ENCODE measurements at regions of chr3 and their contacts with region 1.

Region 1: DNA sequence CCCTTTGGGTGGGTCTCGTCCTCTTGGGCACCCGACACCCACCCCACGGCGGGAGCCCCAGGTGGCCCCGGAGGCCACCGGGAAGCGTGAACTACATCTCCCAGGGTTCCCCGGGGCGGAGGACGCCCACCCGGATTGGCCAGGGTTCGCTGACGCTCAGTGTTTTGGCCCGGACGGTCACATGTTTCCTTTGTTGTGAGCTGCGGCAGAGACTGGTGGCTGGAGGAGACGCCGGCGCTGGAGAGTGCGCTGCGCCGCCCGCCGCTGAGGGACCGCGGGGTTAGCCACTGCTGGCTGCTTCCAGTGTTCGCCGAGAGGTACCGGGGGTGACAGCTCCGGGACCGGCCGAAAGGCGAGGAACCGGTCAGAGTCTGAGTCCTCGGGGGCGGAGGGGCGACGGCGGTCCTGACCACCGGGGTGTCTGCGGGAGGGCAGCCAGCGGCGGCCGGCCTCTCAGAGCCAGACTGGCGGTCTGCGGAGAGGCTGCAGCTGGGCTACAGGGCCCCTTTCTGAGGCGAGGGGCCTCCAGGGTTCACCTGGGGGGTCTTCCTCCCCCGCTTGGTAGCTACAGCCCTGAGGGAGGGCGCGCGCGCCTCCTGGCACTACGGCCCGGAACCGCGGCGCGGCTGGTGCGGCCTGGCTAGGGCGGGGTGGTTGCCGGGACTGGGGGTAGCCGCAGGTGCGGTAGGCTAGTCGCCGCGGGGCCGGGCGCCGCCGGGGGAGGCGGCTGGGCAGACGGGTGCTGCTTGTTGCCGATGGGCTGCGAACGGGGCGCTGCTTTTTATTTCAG is at the start of gene KLHL24:
- DNase-seq: peak; percentile 94
- H3K4me3 ChIP-seq: peak within 1 kb of the TSS; percentile 92
- H3K27ac ChIP-seq: peak within 1 kb of the TSS; percentile 80
- H3K4me1 ChIP-seq: peaks cover 24% of the 10 kb centered on the region
- CTCF ChIP-seq: 0 out of 2 replicates have a peak, but pooled peaks have one; percentile 24
- total RNA-seq, gene KLHL24: 37.8 and 45.8 TPM in 2 replicates

Region 2: GRCh38 chr3:183468424-183468823 is 167.2 kb before region 1 on chr3:
- CTCF ChIA-PET with region 1: no interaction called
- POLR2A ChIA-PET with region 1: no interaction called
- intact Hi-C with region 1: loop called (anchors 5 kb)
- DNase-seq: no peak
- H3K4me3 ChIP-seq: no peak overlapping the region
- H3K27ac ChIP-seq: no peak overlapping the region
- H3K4me1 ChIP-seq: peaks cover 28% of the 10 kb centered on the region
- CTCF ChIP-seq: no peak

Region 3: DNA sequence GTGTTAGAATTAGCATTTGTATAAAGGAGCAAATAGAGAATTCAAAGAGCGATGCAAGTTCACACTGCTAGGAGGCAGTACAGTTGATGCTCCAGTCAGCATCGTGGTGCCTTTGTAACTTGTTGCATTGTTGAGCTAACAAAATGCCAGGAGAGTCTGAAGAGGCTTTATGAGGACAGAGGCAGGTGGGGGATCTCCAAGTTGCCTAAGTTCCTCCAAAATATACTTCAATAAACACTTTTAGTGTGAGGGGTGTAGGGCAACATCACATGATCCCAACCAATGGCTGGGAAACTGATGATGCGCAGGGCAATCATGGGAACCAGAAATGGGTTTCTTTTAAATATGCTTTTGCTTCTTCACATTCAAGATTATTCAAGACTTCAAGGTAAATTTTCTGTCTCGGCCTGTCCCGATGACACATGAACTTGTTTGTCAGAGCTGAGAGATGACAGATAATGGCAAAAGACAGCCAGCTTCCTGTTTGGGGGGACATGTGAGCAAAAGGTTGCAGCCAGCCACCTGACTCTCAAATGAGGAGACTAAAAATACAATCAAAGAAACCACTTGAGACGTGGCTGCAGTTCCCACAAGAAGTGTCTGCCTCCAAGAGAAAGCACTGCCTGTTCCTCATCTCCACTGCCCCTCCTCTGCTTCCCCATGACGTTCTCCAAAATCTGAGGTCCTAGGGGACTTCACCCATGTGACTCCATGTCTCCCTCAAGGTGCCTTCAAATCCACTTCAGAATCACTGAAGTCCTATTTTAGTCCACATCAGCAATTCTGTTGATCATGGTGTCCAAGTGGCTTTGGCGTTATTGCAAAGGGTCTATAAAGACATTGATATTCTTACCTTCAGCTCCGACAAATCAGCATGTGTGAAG is 119.4 kb before region 1 on chr3:
- CTCF ChIA-PET with region 1: no interaction called
- POLR2A ChIA-PET with region 1: interaction called, 4 read pairs
- intact Hi-C with region 1: loop called (anchors 2 kb)
- DNase-seq: peak; percentile 93
- H3K4me3 ChIP-seq: peak overlapping the region; percentile 51
- H3K27ac ChIP-seq: peak overlapping the region; percentile 94
- H3K4me1 ChIP-seq: peaks cover 99% of the 10 kb centered on the region
- CTCF ChIP-seq: peak; percentile 84

Region 4: GRCh38 chr3:183548262-183548769 is 87.3 kb before region 1 on chr3:
- CTCF ChIA-PET with region 1: no interaction called
- POLR2A ChIA-PET with region 1: interaction called, 9 read pairs
- intact Hi-C with region 1: loop called (anchors 2 kb)
- DNase-seq: no peak
- H3K4me3 ChIP-seq: peak overlapping the region; percentile 97
- H3K27ac ChIP-seq: peak overlapping the region; percentile 96
- H3K4me1 ChIP-seq: peaks cover 82% of the 10 kb centered on the region
- CTCF ChIP-seq: no peak

Region 5: GRCh38 chr3:183584246-183584913 is 51.2 kb before region 1 on chr3:
- CTCF ChIA-PET with region 1: interaction called, 3 read pairs
- POLR2A ChIA-PET with region 1: interaction called, 20 read pairs
- intact Hi-C with region 1: loop called (anchors 2 kb)
- DNase-seq: peak; percentile 69
- H3K4me3 ChIP-seq: peak overlapping the region; percentile 6
- H3K27ac ChIP-seq: peak overlapping the region; percentile 94
- H3K4me1 ChIP-seq: peaks cover 100% of the 10 kb centered on the region
- CTCF ChIP-seq: no peak

Region 6: DNA sequence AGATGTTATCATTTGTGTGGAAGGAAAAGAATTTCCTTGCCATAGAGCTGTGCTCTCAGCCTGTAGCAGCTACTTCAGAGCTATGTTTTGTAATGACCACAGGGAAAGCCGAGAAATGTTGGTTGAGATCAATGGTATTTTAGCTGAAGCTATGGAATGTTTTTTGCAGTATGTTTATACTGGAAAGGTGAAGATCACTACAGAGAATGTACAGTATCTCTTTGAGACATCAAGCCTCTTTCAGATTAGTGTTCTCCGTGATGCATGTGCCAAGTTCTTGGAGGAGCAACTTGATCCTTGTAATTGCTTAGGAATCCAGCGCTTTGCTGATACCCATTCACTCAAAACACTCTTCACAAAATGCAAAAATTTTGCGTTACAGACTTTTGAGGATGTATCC is 14.9 kb after region 1 on chr3:
- CTCF ChIA-PET with region 1: interaction called, 3 read pairs
- POLR2A ChIA-PET with region 1: interaction called, 13 read pairs
- intact Hi-C with region 1: no loop called
- DNase-seq: no peak
- H3K4me3 ChIP-seq: no peak overlapping the region
- H3K27ac ChIP-seq: no peak overlapping the region
- H3K4me1 ChIP-seq: no peaks in the 10 kb centered on the region
- CTCF ChIP-seq: no peak

Region 7: GRCh38 chr3:184096811-184097383 is 461.3 kb after region 1 on chr3 and contains the start of gene HTR3E:
- CTCF ChIA-PET with region 1: no interaction called
- POLR2A ChIA-PET with region 1: no interaction called
- intact Hi-C with region 1: no loop called
- DNase-seq: no peak
- H3K4me3 ChIP-seq: no peak within 1 kb of the TSS
- H3K27ac ChIP-seq: no peak within 1 kb of the TSS
- H3K4me1 ChIP-seq: no peaks in the 10 kb centered on the region
- CTCF ChIP-seq: no peak
- total RNA-seq, gene HTR3E: not detected in 2 replicates

Measured in OCI-LY7 (cell line).